ENCODE measurements at regions of chr9 and their contacts with region 1.

Region 1: DNA sequence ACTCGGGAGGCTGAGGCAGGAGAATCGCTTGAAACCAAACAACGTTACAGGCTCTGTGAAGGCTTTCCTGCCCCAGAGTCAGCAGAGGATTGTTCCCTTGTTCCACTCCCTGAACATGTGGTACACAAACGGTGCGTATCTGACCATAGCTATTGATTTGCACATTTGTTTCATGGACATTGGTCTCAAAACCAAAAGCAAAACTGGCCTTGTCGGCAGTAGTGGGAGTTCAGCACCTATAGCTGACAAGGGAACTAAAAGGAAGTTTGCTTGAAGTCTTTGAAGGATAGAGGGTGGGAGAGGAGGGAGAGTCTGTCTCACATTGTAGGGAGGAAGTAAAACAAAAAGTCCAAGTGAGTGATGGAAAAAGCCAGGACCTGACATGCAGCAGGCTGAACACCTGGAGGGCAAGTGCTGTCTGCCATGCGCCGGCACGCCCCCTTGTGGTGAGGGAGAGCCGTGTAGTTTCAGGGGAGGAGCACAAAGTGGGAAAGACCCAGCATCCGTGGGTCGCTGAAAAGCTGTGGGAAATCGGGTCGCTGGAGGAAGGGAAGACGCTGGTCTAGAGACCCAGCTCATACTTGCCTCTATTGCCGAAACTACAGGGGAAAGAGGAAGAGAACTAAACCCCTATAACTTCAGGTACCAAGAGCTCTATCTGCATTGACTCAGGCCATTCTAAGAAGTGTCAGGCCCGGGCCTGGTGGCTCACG is 58.0 kb downstream of the RAD23B start:
- DNase-seq: peak; percentile 86 to 92
- H3K4me3 ChIP-seq: no peak overlapping the region
- H3K4me3 Mint-ChIP-seq: peak overlapping the region; percentile 3
- H3K27ac Mint-ChIP-seq: peak overlapping the region; percentile 60
- H3K4me1 ChIP-seq: no peaks in the 10 kb centered on the region
- H3K4me1 Mint-ChIP-seq: peaks cover 14% of the 10 kb centered on the region
- H3K27me3 ChIP-seq: no peaks in the 10 kb centered on the region
- H3K27me3 Mint-ChIP-seq: no peaks in the 10 kb centered on the region
- CTCF ChIP-seq: peak; percentile 90 to 94

Region 2: GRCh38 chr9:107158321-107158720 is 182.8 kb before region 1 on chr9:
- CTCF ChIA-PET with region 1: interaction called, 4 read pairs
- POLR2A ChIA-PET with region 1: no interaction called
- intact Hi-C with region 1: loop called (anchors 1 kb)
- DNase-seq: peak; percentile 46 to 52
- H3K4me3 ChIP-seq: no peak overlapping the region
- H3K4me3 Mint-ChIP-seq: no peak overlapping the region
- H3K27ac Mint-ChIP-seq: no peak overlapping the region
- H3K4me1 ChIP-seq: no peaks in the 10 kb centered on the region
- H3K4me1 Mint-ChIP-seq: no peaks in the 10 kb centered on the region
- H3K27me3 ChIP-seq: no peaks in the 10 kb centered on the region
- H3K27me3 Mint-ChIP-seq: peaks cover 9% of the 10 kb centered on the region
- CTCF ChIP-seq: peak; percentile 68 to 69

Region 3: GRCh38 chr9:107243751-107244150 is 97.3 kb before region 1 on chr9:
- CTCF ChIA-PET with region 1: interaction called, 22 read pairs
- POLR2A ChIA-PET with region 1: no interaction called
- intact Hi-C with region 1: loop called (anchors 1 kb)
- DNase-seq: peak; percentile 87 to 89
- H3K4me3 ChIP-seq: no peak overlapping the region
- H3K4me3 Mint-ChIP-seq: peak overlapping the region; percentile 58
- H3K27ac Mint-ChIP-seq: peak overlapping the region; percentile 89
- H3K4me1 ChIP-seq: peaks cover 72% of the 10 kb centered on the region
- H3K4me1 Mint-ChIP-seq: peaks cover 34% of the 10 kb centered on the region
- H3K27me3 ChIP-seq: no peaks in the 10 kb centered on the region
- H3K27me3 Mint-ChIP-seq: no peaks in the 10 kb centered on the region
- CTCF ChIP-seq: no peak

Region 4: DNA sequence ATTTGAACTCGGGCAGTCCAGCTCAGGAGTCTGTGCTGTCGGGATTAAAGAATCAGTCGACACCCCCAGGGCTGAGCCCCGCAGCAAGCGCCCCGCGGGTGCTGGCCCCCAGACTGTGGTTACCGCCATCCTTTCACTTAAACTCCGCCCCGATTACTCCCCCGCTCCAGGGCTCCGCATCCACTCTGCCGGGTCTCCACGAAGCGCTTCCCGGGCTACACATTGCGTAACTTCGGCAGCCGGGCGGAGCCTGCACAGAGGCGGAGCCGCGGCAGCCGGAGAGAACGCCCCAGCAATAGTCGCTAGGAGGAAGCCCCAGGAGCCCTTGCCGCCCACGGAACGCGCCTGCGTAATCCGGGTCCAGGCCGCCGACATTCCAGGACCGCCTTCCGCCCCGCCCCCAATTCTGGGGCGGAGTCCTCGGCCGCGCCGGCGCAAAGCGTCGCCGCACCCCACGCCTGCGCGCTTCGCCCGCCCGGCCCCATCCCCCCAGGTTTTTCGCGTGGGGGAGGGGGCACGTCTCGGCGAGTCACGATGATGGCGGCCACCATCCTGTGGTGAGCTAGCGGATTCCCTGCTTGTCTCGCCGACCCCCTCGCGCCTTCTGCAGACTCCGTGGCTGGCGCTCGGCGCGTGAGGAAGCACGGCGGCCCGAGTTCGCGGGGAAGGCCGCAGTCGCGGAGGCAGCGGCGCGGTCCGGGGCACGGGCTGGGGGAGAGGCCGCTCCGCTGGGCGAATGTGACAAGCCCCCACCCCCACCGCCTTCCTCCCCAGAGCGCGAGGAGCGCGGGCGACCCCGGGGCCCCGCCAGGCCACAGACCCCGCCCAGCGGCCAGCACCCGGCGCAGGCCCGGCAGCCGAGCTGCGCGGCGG is 58.1 kb before region 1 on chr9 and contains the start of gene RAD23B:
- CTCF ChIA-PET with region 1: no interaction called
- POLR2A ChIA-PET with region 1: no interaction called
- intact Hi-C with region 1: no loop called
- DNase-seq: peak; percentile 99
- H3K4me3 ChIP-seq: peak within 1 kb of the TSS; percentile 78
- H3K4me3 Mint-ChIP-seq: peak within 1 kb of the TSS; percentile 93
- H3K27ac Mint-ChIP-seq: peak within 1 kb of the TSS; percentile 92
- H3K4me1 ChIP-seq: peaks cover 37% of the 10 kb centered on the region
- H3K4me1 Mint-ChIP-seq: peaks cover 27% of the 10 kb centered on the region
- H3K27me3 ChIP-seq: no peaks in the 10 kb centered on the region
- H3K27me3 Mint-ChIP-seq: no peaks in the 10 kb centered on the region
- CTCF ChIP-seq: peak in 1 of 2 experiments; percentile 1
- total RNA-seq, gene RAD23B: 188 TPM in 2 replicates

Region 5: GRCh38 chr9:107711540-107711939 is 370.5 kb after region 1 on chr9:
- CTCF ChIA-PET with region 1: no interaction called
- POLR2A ChIA-PET with region 1: no interaction called
- intact Hi-C with region 1: no loop called
- DNase-seq: no peak
- H3K4me3 ChIP-seq: no peak overlapping the region
- H3K4me3 Mint-ChIP-seq: no peak overlapping the region
- H3K27ac Mint-ChIP-seq: no peak overlapping the region
- H3K4me1 ChIP-seq: no peaks in the 10 kb centered on the region
- H3K4me1 Mint-ChIP-seq: peaks cover 7% of the 10 kb centered on the region
- H3K27me3 ChIP-seq: no peaks in the 10 kb centered on the region
- H3K27me3 Mint-ChIP-seq: no peaks in the 10 kb centered on the region
- CTCF ChIP-seq: no peak

Measured in Caco-2 (cell line).